ENCODE measurements at regions of chr1 and their contacts with region 1.

Region 1: GRCh38 chr1:208219659-208220282 is 24.4 kb downstream of the PLXNA2 start:
- DNase-seq: peak; percentile 98
- H3K4me3 Mint-ChIP-seq: peak overlapping the region; percentile 57
- H3K27ac Mint-ChIP-seq: peak overlapping the region; percentile 97
- H3K4me1 Mint-ChIP-seq: peaks cover 60% of the 10 kb centered on the region
- H3K27me3 Mint-ChIP-seq: no peaks in the 10 kb centered on the region
- CTCF ChIP-seq: no peak

Region 2: GRCh38 chr1:208192995-208193394 is 26.8 kb before region 1 on chr1:
- CTCF ChIA-PET with region 1: interaction called, 7 read pairs
- POLR2A ChIA-PET with region 1: interaction called, 219 read pairs
- intact Hi-C with region 1: no loop called
- DNase-seq: peak; percentile 75
- H3K4me3 Mint-ChIP-seq: no peak overlapping the region
- H3K27ac Mint-ChIP-seq: no peak overlapping the region
- H3K4me1 Mint-ChIP-seq: peaks cover 30% of the 10 kb centered on the region
- H3K27me3 Mint-ChIP-seq: no peaks in the 10 kb centered on the region
- CTCF ChIP-seq: no peak

Region 3: DNA sequence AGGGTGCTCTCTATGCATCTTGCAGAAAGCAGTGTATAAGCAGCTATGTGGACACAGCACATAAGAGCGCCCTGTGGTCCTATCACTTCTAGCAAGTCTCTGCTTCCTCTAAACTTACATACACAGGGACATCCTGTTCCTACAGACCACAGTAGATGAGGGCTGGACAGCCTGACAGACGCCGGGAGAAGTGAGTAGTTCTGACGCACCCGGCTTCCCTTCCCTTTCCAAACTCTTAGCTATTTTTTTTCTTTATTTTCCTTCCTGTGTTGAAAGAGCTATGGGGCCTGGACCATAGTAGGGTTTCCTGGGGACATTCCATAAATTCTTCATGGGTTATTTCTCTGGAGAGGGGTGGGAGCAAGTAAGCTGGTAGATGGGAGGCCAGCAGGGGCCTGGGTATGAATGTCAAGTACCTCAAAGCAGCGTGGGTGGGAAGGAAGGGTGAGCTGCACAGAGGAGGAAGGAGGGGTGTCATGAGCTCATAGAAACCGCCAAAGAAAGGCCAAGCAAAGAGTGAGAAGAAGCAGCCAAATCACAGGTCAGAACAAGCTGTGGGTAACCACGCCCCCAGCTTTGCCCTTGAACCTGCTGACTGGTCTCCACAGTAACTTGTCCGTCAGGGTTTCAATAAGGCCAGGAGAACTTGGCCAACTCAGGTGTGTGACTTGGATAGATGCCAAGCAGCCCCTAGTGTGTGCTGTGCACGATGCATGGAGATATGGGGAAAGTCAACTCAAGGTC is 12.2 kb before region 1 on chr1:
- CTCF ChIA-PET with region 1: interaction called, 45 read pairs
- POLR2A ChIA-PET with region 1: interaction called, 219 read pairs
- intact Hi-C with region 1: loop called (anchors 1 kb)
- DNase-seq: peak; percentile 100
- H3K4me3 Mint-ChIP-seq: peak overlapping the region; percentile 43
- H3K27ac Mint-ChIP-seq: peak overlapping the region; percentile 89
- H3K4me1 Mint-ChIP-seq: peaks cover 30% of the 10 kb centered on the region
- H3K27me3 Mint-ChIP-seq: no peaks in the 10 kb centered on the region
- CTCF ChIP-seq: no peak

Region 4: GRCh38 chr1:208233546-208233945 is 13.8 kb after region 1 on chr1:
- CTCF ChIA-PET with region 1: interaction called, 545 read pairs
- POLR2A ChIA-PET with region 1: interaction called, 186 read pairs
- intact Hi-C with region 1: loop called (anchors 2 kb)
- DNase-seq: no peak
- H3K4me3 Mint-ChIP-seq: no peak overlapping the region
- H3K27ac Mint-ChIP-seq: peak overlapping the region; percentile 32
- H3K4me1 Mint-ChIP-seq: peaks cover 71% of the 10 kb centered on the region
- H3K27me3 Mint-ChIP-seq: no peaks in the 10 kb centered on the region
- CTCF ChIP-seq: no peak

Measured in MCF 10A (cell line).